ENCODE measurements at regions of chr13 and their contacts with region 1.

Region 1: DNA sequence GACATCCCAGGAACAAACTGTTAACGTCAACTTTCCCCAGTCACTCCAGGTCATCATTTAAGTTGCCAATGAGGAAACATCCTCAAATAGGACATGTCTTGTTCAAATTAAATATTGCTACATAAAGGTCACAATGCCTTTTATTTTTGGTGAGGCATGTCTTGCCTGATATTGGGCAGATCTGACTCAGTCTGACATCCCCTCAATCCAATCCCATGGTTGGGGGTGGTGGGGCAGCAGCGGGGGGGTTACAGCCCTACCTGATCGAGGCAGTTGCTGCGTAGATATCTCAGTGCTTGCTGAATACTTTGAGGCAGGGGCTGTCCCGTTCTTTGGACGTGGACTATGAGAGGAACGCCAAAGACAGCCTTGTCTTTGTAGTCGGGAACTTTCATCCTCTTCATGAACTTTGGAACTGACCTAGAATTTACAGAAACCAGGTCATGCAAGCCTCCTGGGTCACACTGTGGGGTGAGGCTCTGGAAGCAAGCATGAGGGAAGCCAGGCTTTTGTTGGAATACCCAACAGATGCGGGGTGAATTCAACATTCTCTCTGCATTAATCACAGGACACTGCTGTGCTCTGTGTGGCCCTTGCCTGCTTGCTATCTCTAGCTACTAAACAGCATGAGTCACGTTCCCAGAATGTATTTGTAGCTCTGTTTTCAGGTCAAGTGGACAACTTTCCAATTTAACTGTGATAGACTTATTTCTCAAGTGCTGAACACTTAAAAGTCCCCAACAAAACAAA is 109.8 kb downstream of the KL start:
- DNase-seq: peak; percentile 97
- ATAC-seq: peak; percentile 85
- H3K4me3 ChIP-seq: no peak overlapping the region
- H3K27ac ChIP-seq: peak overlapping the region; percentile 80
- H3K4me1 ChIP-seq: peaks cover 30% of the 10 kb centered on the region
- H3K27me3 ChIP-seq: no peaks in the 10 kb centered on the region
- CTCF ChIP-seq: no peak
- POLR2A ChIP-seq: no peak
- RAD21 ChIP-seq: peak; percentile 9; the same call in 1 of the 2 replicates

Region 2: DNA sequence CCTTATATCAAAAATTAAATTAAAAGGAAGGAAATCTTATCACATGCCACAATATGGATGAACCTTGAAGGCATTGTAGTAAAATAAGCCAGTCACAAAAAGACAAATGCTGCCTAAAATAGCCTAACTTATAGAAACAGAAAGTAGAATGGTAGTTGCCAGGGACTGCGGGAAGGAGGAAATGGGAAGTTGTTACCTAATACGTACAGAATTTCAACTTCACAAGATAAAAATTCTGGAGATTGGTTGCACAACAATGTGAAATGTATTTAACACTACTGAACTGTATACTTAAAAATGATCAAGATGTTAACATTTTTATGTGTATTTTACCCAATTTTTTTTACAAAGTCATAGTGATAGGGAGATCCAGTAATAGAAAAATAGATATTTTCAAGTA is 577.2 kb before region 1 on chr13:
- CTCF ChIA-PET with region 1: no interaction called
- POLR2A ChIA-PET with region 1: no interaction called
- dilution Hi-C with region 1: no loop called
- in situ Hi-C with region 1: no loop called
- intact Hi-C with region 1: no loop called
- DNase-seq: peak; percentile 41
- ATAC-seq: peak; percentile 11; the same call in 1 of the 2 replicates
- H3K4me3 ChIP-seq: no peak overlapping the region
- H3K27ac ChIP-seq: no peak overlapping the region
- H3K4me1 ChIP-seq: no peaks in the 10 kb centered on the region
- H3K27me3 ChIP-seq: peaks cover 2% of the 10 kb centered on the region; the same call in 1 of the 2 replicates
- CTCF ChIP-seq: no peak
- POLR2A ChIP-seq: no peak
- RAD21 ChIP-seq: no peak

Region 3: DNA sequence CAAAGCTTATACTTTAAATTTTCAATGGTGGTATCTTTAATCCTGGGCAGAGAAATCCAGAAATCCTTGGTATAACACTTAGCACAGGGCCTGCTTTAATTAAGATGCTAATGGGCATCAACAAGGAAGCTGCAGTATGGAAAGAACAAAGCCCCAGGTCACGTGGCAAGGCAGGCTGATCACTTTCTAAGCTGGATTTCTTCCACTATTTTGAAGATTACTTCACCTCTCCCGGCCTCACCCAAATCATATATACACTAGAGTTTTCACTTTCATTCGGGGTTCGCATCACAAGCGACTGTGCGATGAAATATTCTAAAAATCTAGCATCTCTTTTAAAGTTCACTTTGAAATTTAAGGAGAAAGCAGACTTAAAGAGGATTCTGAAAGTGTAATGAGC is 87.8 kb after region 1 on chr13:
- CTCF ChIA-PET with region 1: no interaction called
- POLR2A ChIA-PET with region 1: no interaction called
- dilution Hi-C with region 1: no loop called
- in situ Hi-C with region 1: no loop called
- intact Hi-C with region 1: loop called (anchors 5 kb)
- DNase-seq: peak; percentile 65
- ATAC-seq: peak; percentile 7
- H3K4me3 ChIP-seq: peak overlapping the region; percentile 3; the same call in 1 of the 2 replicates
- H3K27ac ChIP-seq: peak overlapping the region; percentile 84
- H3K4me1 ChIP-seq: peaks cover 31% of the 10 kb centered on the region
- H3K27me3 ChIP-seq: no peaks in the 10 kb centered on the region
- CTCF ChIP-seq: no peak
- POLR2A ChIP-seq: no peak
- RAD21 ChIP-seq: no peak

Region 4: GRCh38 chr13:33322543-33322809 is 196.5 kb after region 1 on chr13:
- CTCF ChIA-PET with region 1: no interaction called
- POLR2A ChIA-PET with region 1: no interaction called
- dilution Hi-C with region 1: no loop called
- in situ Hi-C with region 1: no loop called
- intact Hi-C with region 1: no loop called
- DNase-seq: peak; percentile 95
- ATAC-seq: peak; percentile 55
- H3K4me3 ChIP-seq: peak overlapping the region; percentile 27; the same call in 1 of the 2 replicates
- H3K27ac ChIP-seq: peak overlapping the region; percentile 96; the same call in 1 of the 2 replicates
- H3K4me1 ChIP-seq: peaks cover 18% of the 10 kb centered on the region
- H3K27me3 ChIP-seq: no peaks in the 10 kb centered on the region
- CTCF ChIP-seq: no peak
- POLR2A ChIP-seq: no peak
- RAD21 ChIP-seq: no peak